ENCODE measurements at regions of chr2 and their contacts with region 1.

Region 1: GRCh38 chr2:236569573-236569973 is at the start of gene ACKR3:
- DNase-seq: peak; percentile 76 to 90 (median 82)
- H3K4me3 ChIP-seq: peak within 1 kb of the TSS in 1 of 2 donors; percentile 27
- H3K4me3 Mint-ChIP-seq: peak within 1 kb of the TSS; percentile 57 to 77 (median 66)
- H3K27ac ChIP-seq: no peak within 1 kb of the TSS
- H3K27ac Mint-ChIP-seq: peak within 1 kb of the TSS; percentile 10 to 77 (median 72)
- H3K4me1 ChIP-seq: peaks cover 20% of the 10 kb centered on the region
- H3K4me1 Mint-ChIP-seq: peaks cover 20 to 32% (median 24%) of the 10 kb centered on the region in 4 donors
- H3K27me3 ChIP-seq: no peaks in the 10 kb centered on the region
- H3K27me3 Mint-ChIP-seq: no peaks in the 10 kb centered on the region
- total RNA-seq, gene ACKR3: 4.2 TPM

Region 2: DNA sequence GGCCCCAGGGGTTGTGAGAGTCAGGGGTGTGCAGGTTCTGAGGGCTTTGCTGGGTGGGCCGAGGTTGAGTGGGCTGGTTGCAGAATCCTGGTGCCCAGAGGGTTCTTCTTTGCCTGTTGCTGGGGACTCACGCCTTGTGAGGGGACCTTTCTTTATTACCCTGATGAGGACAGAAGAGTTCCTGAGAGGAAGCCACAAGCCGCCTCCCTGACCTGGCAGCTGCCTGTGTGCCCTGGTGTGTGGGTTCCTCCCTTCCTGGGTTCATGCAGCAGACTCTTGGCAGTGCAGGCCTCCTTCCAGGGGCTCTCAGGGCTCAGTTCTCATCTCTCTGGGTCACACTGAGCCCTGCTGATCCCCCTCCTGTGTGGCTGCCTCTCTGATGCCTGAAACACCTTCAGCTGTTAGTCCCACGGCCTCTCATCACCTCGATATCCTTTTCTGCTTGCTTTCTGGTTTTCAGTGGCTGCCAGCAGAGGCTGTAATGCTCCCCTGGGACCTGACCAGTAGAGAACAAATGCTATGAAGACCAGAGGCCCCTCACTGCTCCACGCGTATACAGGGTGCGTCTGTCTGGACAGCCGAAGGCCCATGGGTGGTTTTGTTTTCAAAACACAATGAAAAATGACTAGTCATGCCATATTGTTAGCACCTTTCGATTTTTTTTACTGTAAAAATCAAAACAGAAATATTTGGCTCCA is 884.4 kb before region 1 on chr2:
- CTCF ChIA-PET with region 1: no interaction called
- POLR2A ChIA-PET with region 1: no interaction called
- intact Hi-C with region 1: no loop called
- DNase-seq: peak in 1 of 5 donors; percentile 13
- H3K4me3 ChIP-seq: no peak overlapping the region
- H3K4me3 Mint-ChIP-seq: peak overlapping the region; percentile 36 to 64 (median 50)
- H3K27ac ChIP-seq: no peak overlapping the region
- H3K27ac Mint-ChIP-seq: peak overlapping the region; percentile 2 to 76 (median 51)
- H3K4me1 ChIP-seq: peaks cover 12% of the 10 kb centered on the region
- H3K4me1 Mint-ChIP-seq: peaks cover 2 to 25% (median 10%) of the 10 kb centered on the region in 4 donors
- H3K27me3 ChIP-seq: no peaks in the 10 kb centered on the region
- H3K27me3 Mint-ChIP-seq: peaks cover 0 to 1% of the 10 kb centered on the region in 2 donors

Region 3: GRCh38 chr2:236352761-236353593 is 216.6 kb before region 1 on chr2:
- CTCF ChIA-PET with region 1: interaction called, 24 read pairs
- POLR2A ChIA-PET with region 1: interaction called, 3 read pairs
- intact Hi-C with region 1: loop called (anchors 1 kb)
- DNase-seq: peak in 4 of 5 donors; percentile 39 to 51 (median 45)
- H3K4me3 ChIP-seq: no peak overlapping the region
- H3K4me3 Mint-ChIP-seq: peak overlapping the region in 1 of 8 donors; percentile 56
- H3K27ac ChIP-seq: no peak overlapping the region
- H3K27ac Mint-ChIP-seq: peak overlapping the region in 2 of 7 donors; percentile 12 to 72
- H3K4me1 ChIP-seq: no peaks in the 10 kb centered on the region
- H3K4me1 Mint-ChIP-seq: peaks cover 4 to 7% (median 6%) of the 10 kb centered on the region in 4 donors
- H3K27me3 ChIP-seq: no peaks in the 10 kb centered on the region
- H3K27me3 Mint-ChIP-seq: peaks cover 10 to 20% of the 10 kb centered on the region in 2 donors

Region 4: GRCh38 chr2:236503100-236503499 is 66.5 kb before region 1 on chr2:
- CTCF ChIA-PET with region 1: interaction called, 410 read pairs
- POLR2A ChIA-PET with region 1: no interaction called
- intact Hi-C with region 1: no loop called
- DNase-seq: peak in 1 of 5 donors; percentile 11
- H3K4me3 ChIP-seq: no peak overlapping the region
- H3K4me3 Mint-ChIP-seq: no peak overlapping the region
- H3K27ac ChIP-seq: no peak overlapping the region
- H3K27ac Mint-ChIP-seq: no peak overlapping the region
- H3K4me1 ChIP-seq: peaks cover 5% of the 10 kb centered on the region
- H3K4me1 Mint-ChIP-seq: peaks cover 4 to 6% (median 5%) of the 10 kb centered on the region in 4 donors
- H3K27me3 ChIP-seq: peaks cover 3% of the 10 kb centered on the region
- H3K27me3 Mint-ChIP-seq: peaks cover 32 to 45% of the 10 kb centered on the region in 2 donors

Region 5: DNA sequence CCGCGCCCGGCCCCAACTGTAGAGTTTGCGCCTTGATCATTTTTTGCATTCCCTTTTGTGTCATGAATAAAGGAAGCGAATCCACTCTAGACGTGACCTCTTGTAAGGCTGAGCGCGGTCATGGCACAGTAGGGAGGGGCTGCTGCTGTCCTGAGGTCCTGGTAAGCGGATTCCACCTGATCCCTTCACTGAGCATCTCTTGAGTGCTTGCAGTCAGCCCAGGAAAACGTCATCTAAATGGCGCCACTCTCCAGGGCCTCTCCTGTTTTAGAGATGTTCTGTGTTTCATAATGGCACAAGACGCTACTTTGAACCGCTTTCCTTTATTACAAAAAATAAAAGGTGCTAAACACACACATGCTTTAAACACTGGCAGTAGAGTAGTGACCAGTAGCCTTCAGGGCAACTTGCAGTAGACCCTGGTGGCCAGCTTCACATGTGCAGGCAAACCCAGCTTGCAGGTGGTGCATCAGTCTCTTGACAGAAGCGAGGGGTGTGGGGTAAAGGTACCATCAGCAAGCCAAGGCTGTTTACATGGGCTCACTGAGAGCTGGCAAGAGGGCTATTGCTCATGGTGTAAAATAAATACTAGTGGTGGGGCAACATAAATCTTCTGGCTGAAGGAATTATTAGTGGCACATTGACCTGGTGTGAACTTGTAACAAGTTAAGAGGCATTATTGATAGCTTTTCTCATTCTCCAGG is 43.0 kb before region 1 on chr2:
- CTCF ChIA-PET with region 1: interaction called, 14 read pairs
- POLR2A ChIA-PET with region 1: no interaction called
- intact Hi-C with region 1: no loop called
- DNase-seq: no peak
- H3K4me3 ChIP-seq: no peak overlapping the region
- H3K4me3 Mint-ChIP-seq: no peak overlapping the region
- H3K27ac ChIP-seq: no peak overlapping the region
- H3K27ac Mint-ChIP-seq: no peak overlapping the region
- H3K4me1 ChIP-seq: no peaks in the 10 kb centered on the region
- H3K4me1 Mint-ChIP-seq: no peaks in the 10 kb centered on the region
- H3K27me3 ChIP-seq: no peaks in the 10 kb centered on the region
- H3K27me3 Mint-ChIP-seq: peaks cover 4 to 8% of the 10 kb centered on the region in 2 donors

Region 6: DNA sequence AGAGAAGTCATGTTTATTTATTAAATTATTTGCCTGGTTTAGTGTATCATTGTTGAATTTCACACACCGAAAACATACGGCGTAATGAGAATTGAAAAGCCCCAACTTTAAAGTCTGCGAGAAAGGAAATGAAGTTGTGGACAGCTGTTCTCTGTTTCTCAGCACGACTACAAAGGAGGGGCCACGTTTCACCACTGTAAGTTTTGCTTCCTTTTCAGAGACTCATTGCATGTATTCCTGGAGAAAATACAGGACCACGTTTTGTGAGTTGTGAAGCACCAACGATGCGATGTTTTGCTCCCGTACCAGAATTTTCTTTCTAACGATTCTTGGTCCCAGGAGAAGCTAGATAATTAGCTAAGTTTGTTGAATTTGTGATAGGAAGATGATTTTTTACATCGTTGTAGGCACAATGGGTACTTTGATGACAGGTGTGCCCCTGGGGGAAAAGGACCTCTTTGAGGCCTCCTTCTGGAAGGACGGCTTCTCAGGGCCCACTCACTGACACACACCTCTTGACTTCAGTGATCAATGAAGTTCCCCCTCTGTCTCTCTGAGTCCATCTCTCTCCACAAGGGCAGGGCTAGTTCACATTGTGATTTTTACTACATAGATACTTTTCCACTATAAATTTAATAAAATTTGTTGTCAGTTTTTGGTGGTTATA is 23.6 kb before region 1 on chr2:
- CTCF ChIA-PET with region 1: interaction called, 18 read pairs
- POLR2A ChIA-PET with region 1: interaction called, 28 read pairs
- intact Hi-C with region 1: loop called (anchors 2 kb)
- DNase-seq: peak in 4 of 5 donors; percentile 20 to 32 (median 26)
- H3K4me3 ChIP-seq: no peak overlapping the region
- H3K4me3 Mint-ChIP-seq: peak overlapping the region; percentile 49 to 79 (median 73)
- H3K27ac ChIP-seq: peak overlapping the region; percentile 57
- H3K27ac Mint-ChIP-seq: peak overlapping the region; percentile 81 to 96 (median 86)
- H3K4me1 ChIP-seq: peaks cover 80% of the 10 kb centered on the region
- H3K4me1 Mint-ChIP-seq: peaks cover 79 to 97% (median 89%) of the 10 kb centered on the region in 4 donors
- H3K27me3 ChIP-seq: no peaks in the 10 kb centered on the region
- H3K27me3 Mint-ChIP-seq: no peaks in the 10 kb centered on the region

Region 7: GRCh38 chr2:236582968-236583367 is 13.4 kb after region 1 on chr2:
- CTCF ChIA-PET with region 1: interaction called, 13 read pairs
- POLR2A ChIA-PET with region 1: interaction called, 3 read pairs
- intact Hi-C with region 1: no loop called
- DNase-seq: no peak
- H3K4me3 ChIP-seq: no peak overlapping the region
- H3K4me3 Mint-ChIP-seq: no peak overlapping the region
- H3K27ac ChIP-seq: no peak overlapping the region
- H3K27ac Mint-ChIP-seq: no peak overlapping the region
- H3K4me1 ChIP-seq: no peaks in the 10 kb centered on the region
- H3K4me1 Mint-ChIP-seq: peaks cover 0 to 2% (median 0%) of the 10 kb centered on the region in 4 donors
- H3K27me3 ChIP-seq: no peaks in the 10 kb centered on the region
- H3K27me3 Mint-ChIP-seq: no peaks in the 10 kb centered on the region

Region 8: DNA sequence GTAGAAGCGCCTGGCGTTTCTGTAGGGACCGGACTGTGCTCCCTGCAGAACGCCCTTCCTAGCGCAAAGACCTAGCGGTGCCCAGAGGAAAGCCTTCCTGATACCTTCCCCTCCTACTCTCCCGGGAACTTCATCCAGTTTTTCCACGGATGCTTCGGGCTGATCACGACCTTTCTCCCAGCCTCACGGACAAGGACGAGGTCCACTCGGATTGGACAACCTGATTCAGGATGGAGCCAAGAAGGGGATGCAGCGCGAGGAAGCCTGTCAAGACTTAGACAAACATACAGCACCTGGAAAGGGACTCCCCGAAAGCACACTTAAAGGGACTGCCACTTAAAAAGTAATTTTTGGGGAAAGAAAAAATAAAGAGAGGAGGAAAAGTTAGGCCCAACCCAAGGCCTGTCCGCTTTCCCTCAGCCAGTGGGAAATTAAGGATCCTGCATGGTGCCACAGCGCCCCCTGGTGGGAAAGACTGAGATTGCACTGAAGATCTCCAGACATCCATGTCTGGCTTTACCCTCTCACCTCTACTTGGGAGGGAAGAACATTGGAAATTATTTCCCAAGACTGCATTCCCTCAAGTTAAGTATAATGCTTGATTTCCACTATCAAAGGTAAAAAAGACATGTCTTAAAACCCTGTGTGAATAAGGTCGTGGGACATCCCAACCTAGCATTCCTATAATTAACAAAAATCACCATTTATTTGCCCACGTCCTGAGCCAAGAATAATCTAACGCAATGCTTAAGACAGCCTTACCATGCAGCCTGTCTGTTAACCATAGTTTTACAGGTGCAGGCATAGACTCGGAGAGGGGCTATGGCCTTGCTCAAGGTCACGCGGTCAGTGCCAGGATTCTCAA is 502.7 kb after region 1 on chr2:
- CTCF ChIA-PET with region 1: interaction called, 3 read pairs
- POLR2A ChIA-PET with region 1: no interaction called
- intact Hi-C with region 1: loop called (anchors 2 kb)
- DNase-seq: peak; percentile 46 to 60 (median 51)
- H3K4me3 ChIP-seq: no peak overlapping the region
- H3K4me3 Mint-ChIP-seq: no peak overlapping the region
- H3K27ac ChIP-seq: no peak overlapping the region
- H3K27ac Mint-ChIP-seq: no peak overlapping the region
- H3K4me1 ChIP-seq: no peaks in the 10 kb centered on the region
- H3K4me1 Mint-ChIP-seq: no peaks in the 10 kb centered on the region
- H3K27me3 ChIP-seq: no peaks in the 10 kb centered on the region
- H3K27me3 Mint-ChIP-seq: no peaks in the 10 kb centered on the region

Measured in CD4-positive, alpha-beta memory T cell (primary cell).